ENCODE measurements at regions of chr16 and their contacts with region 1.

Region 1: GRCh38 chr16:23280483-23280967 is 21.6 kb upstream of the SCNN1B start:
- DNase-seq: no peak
- H3K4me3 ChIP-seq: no peak overlapping the region
- CTCF ChIP-seq: no peak

Region 2: DNA sequence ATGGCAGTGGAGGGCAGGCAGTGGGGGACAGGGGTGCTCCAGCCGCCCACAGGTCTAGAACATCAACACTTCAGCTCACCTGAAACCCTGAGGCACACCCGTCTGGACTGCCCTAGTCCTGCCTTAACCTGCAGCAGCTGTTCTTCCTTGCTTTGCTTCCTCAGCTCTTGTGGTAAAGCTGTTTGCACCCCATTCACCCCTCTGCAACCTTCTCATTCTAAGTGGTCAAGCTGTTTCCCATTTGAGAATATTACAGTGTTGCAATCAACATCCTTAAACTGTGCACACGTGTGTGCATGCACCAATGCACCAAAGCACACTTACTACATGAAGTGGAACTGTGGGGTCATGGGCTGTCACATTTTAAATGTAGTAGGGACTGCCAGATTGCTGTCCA is 53.9 kb after region 1 on chr16:
- in situ Hi-C with region 1: no loop called
- DNase-seq: no peak
- H3K4me3 ChIP-seq: no peak overlapping the region
- CTCF ChIP-seq: no peak

Region 3: DNA sequence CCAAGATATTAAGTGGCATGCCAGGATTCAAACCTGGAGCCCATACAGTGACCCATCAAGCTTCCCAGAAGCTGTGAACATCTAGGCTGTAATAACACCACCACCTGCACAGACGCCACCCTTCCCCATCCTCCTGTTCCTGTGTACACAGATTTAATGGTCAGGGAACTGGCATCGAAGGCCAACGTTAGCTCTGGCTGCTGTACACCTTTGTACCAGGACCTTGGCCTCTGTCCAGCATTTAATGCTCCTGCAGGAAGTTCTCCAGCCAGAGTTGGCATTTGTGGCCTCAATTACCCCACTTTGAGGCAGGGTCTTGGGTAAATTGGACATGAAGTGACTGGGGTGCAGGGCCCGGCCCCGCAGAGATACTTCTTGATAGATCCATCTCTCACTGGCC is 70.8 kb after region 1 on chr16:
- in situ Hi-C with region 1: loop called (anchors 5 kb)
- DNase-seq: no peak
- H3K4me3 ChIP-seq: no peak overlapping the region
- CTCF ChIP-seq: no peak

Region 4: DNA sequence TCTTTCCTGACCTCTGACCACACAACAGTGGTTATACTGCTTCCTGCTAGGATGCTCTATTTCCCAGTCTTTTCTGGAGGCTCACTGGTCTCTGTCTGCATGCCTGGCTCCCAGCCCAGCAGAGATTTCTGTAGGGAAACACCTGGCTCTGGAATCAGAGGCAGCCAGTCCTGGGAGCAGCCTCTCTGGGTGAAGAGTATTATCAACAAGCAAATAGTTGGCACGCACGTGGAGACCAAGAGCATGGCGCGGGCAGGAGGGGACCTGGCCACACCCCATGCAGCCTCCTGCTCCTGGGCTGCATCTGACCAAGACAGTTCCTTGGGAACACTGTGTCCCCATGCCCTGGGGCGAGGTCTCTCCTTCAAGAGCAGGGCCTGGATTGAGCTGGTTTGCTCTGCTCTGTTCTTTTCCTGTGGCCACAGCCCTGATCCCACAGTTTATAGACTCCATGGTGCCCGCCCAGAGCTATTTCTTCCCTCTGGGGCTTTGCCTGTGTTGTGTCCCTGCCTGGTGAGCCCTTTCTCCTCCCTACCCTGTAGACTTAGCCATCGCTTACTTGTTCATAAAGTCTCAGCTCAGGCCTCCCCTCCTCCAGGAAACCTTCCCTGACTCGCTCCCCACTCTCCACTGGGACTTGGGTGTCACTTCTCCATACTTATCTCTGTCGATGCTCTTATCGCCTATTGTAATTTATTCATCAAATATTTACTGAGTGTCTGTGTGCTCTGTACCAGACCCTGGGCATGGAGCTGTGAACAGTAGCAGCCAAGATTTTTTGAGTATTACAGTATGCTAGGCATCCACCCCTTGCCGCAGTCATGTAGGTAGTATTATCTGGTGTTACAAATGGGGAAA is 82.2 kb after region 1 on chr16:
- in situ Hi-C with region 1: no loop called
- DNase-seq: no peak
- H3K4me3 ChIP-seq: no peak overlapping the region
- CTCF ChIP-seq: no peak